ENCODE measurements at regions of chr12 and their contacts with region 1.

Region 1: GRCh38 chr12:123075646-123076171 is 75.2 kb downstream of the PITPNM2 start:
- DNase-seq: peak; percentile 76 to 86 (median 80)
- H3K4me3 ChIP-seq: peak overlapping the region; percentile 3 to 53
- H3K4me3 Mint-ChIP-seq: peak overlapping the region; percentile 85 to 93 (median 90)
- H3K27ac ChIP-seq: peak overlapping the region; percentile 60
- H3K27ac Mint-ChIP-seq: peak overlapping the region; percentile 89 to 98 (median 97)
- H3K4me1 ChIP-seq: peaks cover 42% of the 10 kb centered on the region
- H3K4me1 Mint-ChIP-seq: peaks cover 37 to 46% (median 40%) of the 10 kb centered on the region in 4 donors
- H3K27me3 ChIP-seq: no peaks in the 10 kb centered on the region
- H3K27me3 Mint-ChIP-seq: no peaks in the 10 kb centered on the region

Region 2: DNA sequence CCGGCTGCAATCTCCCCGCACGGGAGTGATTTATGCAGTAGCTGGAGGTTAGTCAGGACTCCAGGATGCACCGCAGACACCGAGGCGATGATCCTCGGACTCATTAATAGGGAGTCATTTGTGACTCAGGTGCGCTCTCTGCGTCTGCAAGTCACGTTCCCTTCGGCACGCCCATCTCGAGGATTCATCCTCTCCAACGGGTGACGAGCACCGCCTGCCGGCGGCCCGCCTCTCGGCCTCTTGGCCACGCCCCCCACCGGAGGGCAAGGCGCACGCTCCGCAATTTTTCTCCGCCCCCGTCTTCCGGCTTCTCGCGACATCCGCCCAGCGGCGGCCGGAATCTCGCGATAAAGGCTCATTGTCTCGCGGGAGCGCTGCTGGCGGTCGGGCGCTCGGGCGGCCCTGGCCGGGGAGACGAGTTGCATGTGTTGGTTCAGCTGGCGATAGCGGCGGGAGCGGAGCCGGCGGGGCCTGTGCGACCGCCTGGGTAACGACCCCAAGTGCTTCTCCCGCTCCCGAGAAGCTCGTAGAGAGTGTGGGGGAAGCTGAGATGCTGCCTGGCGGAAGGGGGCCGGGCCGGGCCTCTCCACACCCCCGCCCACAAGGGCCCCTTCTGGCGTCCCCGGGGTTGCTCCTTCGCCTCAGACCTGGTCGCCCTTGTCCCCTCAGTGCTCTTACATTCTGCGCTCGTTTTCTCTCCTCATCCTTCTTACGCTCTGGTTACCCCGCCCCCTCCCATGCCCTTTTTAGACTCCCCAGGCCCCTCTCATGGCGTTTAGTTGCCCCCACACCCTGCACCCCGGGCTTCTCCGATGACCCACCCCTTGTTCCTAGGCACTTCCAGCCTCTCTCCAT is 323.0 kb before region 1 on chr12 and contains the start of gene DENR:
- CTCF ChIA-PET with region 1: no interaction called
- POLR2A ChIA-PET with region 1: no interaction called
- intact Hi-C with region 1: no loop called
- DNase-seq: peak; percentile 99 to 100 (median 99)
- H3K4me3 ChIP-seq: peak within 1 kb of the TSS; percentile 64 to 77
- H3K4me3 Mint-ChIP-seq: peak within 1 kb of the TSS; percentile 93 to 97 (median 94)
- H3K27ac ChIP-seq: peak within 1 kb of the TSS; percentile 87
- H3K27ac Mint-ChIP-seq: peak within 1 kb of the TSS; percentile 90 to 99 (median 97)
- H3K4me1 ChIP-seq: peaks cover 19% of the 10 kb centered on the region
- H3K4me1 Mint-ChIP-seq: peaks cover 35 to 60% (median 47%) of the 10 kb centered on the region in 4 donors
- H3K27me3 ChIP-seq: no peaks in the 10 kb centered on the region
- H3K27me3 Mint-ChIP-seq: no peaks in the 10 kb centered on the region
- total RNA-seq, gene DENR: 47.8 to 49.1 TPM

Region 3: DNA sequence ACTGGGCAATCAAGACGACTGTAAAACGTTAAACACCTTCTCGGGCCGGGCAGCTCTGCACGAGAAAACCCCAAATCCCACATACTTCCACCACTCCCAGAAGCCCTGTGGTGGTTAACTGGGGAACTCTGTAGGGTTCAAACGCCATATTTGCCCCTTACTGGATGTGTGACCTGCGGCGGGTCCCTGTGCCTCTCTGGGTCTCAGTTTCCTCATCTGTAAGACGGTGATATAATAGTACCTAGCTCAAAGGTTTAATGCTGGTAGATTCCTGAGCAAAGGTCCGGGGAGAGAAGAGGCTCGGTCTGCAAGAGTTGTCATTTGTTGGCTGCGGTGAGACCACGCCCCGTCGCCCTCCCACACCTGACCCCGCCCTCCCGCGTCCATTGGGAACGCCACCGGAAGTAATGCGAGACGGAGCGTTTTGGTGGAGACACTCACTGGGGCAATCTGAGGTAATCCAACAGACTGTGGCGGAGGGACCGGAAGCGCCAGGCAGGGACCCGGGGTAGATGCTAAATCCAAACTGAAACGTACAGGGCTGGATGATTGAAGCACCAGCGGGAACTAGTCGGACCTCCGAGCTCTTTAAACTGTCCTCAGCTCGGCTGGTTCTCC is 101.3 kb before region 1 on chr12:
- CTCF ChIA-PET with region 1: interaction called, 4 read pairs
- POLR2A ChIA-PET with region 1: interaction called, 4 read pairs
- intact Hi-C with region 1: loop called (anchors 2 kb)
- DNase-seq: peak; percentile 97 to 99 (median 98)
- H3K4me3 ChIP-seq: peak overlapping the region; percentile 71 to 100
- H3K4me3 Mint-ChIP-seq: peak overlapping the region; percentile 89 to 99 (median 98)
- H3K27ac ChIP-seq: peak overlapping the region; percentile 98
- H3K27ac Mint-ChIP-seq: peak overlapping the region; percentile 98 to 100 (median 99)
- H3K4me1 ChIP-seq: peaks cover 41% of the 10 kb centered on the region
- H3K4me1 Mint-ChIP-seq: peaks cover 10 to 49% (median 30%) of the 10 kb centered on the region in 4 donors
- H3K27me3 ChIP-seq: no peaks in the 10 kb centered on the region
- H3K27me3 Mint-ChIP-seq: no peaks in the 10 kb centered on the region

Region 4: DNA sequence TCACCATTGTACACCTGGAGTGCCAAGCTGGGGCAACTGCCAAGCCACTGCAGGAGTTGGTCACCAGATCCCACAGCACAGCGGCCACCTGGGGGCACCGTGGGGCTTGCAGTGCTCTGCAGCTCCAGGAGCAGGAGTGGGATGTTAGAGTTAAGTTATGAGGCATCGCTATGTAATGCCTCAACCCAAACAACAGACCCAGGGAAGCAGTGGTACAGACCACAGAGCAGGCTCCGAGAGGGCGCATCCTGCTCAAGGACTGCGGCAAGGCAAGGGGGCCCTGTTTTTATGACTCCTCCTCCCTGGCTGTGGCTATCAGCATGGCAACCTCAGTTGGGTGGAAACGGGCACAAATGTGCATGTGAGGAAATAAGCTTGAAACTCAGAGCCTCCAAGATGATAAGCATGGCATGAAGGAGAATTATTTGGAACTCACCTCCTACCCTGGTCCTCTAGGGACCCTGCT is 32.1 kb before region 1 on chr12:
- CTCF ChIA-PET with region 1: interaction called, 29 read pairs
- POLR2A ChIA-PET with region 1: interaction called, 14 read pairs
- intact Hi-C with region 1: no loop called
- DNase-seq: peak; percentile 58 to 69 (median 69)
- H3K4me3 ChIP-seq: no peak overlapping the region
- H3K4me3 Mint-ChIP-seq: peak overlapping the region in 4 of 8 donors; percentile 15 to 64 (median 46)
- H3K27ac ChIP-seq: no peak overlapping the region
- H3K27ac Mint-ChIP-seq: peak overlapping the region in 6 of 7 donors; percentile 8 to 87 (median 73)
- H3K4me1 ChIP-seq: peaks cover 11% of the 10 kb centered on the region
- H3K4me1 Mint-ChIP-seq: peaks cover 9 to 27% (median 16%) of the 10 kb centered on the region in 4 donors
- H3K27me3 ChIP-seq: no peaks in the 10 kb centered on the region
- H3K27me3 Mint-ChIP-seq: no peaks in the 10 kb centered on the region

Region 5: DNA sequence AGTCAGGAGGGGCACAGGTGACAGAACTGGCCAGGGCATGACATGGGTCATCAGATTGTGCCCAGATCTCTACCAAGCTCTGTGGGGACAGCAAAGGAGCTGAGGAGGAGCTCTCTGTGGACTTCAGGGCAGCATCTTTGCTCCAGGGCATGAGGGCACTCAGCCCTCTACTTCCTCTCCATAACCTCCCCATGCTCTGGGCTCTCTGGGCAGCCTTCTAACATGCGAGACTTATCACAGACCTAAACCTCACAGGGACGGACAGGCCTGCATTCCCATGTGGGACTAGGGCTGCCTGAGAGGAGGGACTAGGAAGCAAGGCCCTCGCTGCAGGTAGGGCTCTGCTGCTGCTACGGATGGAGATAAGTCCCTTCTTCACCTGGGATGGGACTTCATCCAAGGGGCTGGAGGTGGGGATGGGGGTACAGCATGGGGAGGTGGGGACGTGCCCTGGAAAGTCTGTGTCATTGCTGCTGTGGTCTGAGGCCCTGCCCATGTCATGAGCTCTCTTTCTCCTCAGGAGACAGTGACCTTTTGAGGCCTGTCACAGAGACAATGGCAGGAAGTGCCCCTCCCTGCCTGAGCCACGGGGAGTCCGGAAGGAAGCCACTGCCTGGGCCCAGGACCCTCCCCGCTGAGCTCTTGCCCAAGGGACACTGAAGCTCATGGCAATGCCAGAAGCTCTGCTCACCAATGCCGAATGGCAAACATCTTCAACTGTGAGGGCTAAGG is 31.1 kb after region 1 on chr12:
- CTCF ChIA-PET with region 1: interaction called, 18 read pairs
- POLR2A ChIA-PET with region 1: interaction called, 27 read pairs
- intact Hi-C with region 1: no loop called
- DNase-seq: peak; percentile 37 to 64 (median 48)
- H3K4me3 ChIP-seq: peak overlapping the region in 1 of 2 donors; percentile 14
- H3K4me3 Mint-ChIP-seq: peak overlapping the region; percentile 67 to 83 (median 75)
- H3K27ac ChIP-seq: peak overlapping the region; percentile 54
- H3K27ac Mint-ChIP-seq: peak overlapping the region; percentile 82 to 96 (median 95)
- H3K4me1 ChIP-seq: peaks cover 33% of the 10 kb centered on the region
- H3K4me1 Mint-ChIP-seq: peaks cover 31 to 54% (median 39%) of the 10 kb centered on the region in 4 donors
- H3K27me3 ChIP-seq: no peaks in the 10 kb centered on the region
- H3K27me3 Mint-ChIP-seq: no peaks in the 10 kb centered on the region

Region 6: DNA sequence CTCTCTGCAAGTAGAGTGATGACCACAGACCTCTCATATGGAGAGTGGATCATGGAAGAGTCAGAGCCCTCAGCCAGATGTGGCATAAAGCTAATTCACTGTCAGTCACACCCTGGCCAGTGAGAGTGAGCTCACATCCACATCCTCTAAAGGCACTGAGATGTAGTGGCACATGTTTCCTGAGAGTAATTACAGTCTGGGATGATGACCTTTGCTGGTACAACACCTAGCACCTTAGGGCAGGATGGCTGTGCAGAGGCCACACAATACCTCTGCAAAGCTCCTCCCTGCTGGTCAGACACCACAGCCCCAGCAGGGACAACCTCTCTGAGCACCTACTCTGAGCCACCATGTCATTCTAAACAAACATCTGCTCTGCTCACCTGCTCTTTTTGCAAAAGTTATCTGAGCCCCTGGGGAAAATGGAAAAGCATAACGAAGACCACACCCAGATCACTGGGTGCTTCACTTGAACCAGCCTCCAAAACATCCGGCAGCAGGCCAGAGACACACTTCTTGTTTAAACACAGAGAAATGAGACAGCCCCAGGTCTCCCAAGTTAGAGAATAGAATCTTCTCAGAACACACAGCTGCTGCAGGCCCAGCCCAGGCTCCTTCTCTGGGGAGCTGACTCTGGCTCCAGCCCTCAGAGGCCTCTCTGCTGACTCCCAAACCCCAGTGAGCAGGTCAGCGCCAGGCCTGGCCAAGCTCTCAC is 44.9 kb after region 1 on chr12:
- CTCF ChIA-PET with region 1: interaction called, 13 read pairs
- POLR2A ChIA-PET with region 1: interaction called, 15 read pairs
- intact Hi-C with region 1: no loop called
- DNase-seq: peak in 2 of 5 donors; percentile 21 to 26
- H3K4me3 ChIP-seq: no peak overlapping the region
- H3K4me3 Mint-ChIP-seq: peak overlapping the region in 7 of 8 donors; percentile 33 to 66 (median 58)
- H3K27ac ChIP-seq: peak overlapping the region; percentile 27
- H3K27ac Mint-ChIP-seq: peak overlapping the region; percentile 82 to 89 (median 86)
- H3K4me1 ChIP-seq: peaks cover 53% of the 10 kb centered on the region
- H3K4me1 Mint-ChIP-seq: peaks cover 23 to 49% (median 38%) of the 10 kb centered on the region in 4 donors
- H3K27me3 ChIP-seq: no peaks in the 10 kb centered on the region
- H3K27me3 Mint-ChIP-seq: no peaks in the 10 kb centered on the region

Region 7: DNA sequence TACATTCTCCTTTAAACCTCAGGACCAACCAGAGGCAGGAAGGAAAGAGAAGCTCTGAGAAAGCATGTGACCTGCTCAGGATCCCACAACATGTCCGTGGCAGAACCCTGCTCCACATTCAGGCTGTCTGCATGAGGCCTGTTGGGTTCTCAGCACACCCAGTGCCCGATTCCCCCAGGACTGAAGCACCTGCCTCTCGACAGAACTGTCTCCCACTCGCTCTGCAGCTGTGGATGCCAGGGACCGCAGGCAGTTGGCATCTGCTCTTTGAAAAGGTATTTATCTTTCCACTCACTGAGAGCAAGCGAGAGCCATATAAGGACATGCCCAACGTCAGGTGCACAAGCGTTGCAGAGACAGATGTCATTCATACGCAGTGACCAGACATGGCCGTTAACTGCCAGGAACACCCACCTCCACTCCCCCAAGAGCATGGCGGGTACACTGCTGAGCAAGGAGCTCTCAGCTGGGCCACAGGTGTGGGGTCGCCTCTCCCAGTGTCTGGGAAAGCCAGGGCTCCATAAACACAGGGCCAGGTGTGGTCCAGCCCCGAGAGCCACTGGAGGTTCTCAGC is 56.3 kb after region 1 on chr12:
- CTCF ChIA-PET with region 1: interaction called, 3 read pairs
- POLR2A ChIA-PET with region 1: interaction called, 8 read pairs
- intact Hi-C with region 1: loop called (anchors 5 kb)
- DNase-seq: peak; percentile 42 to 63 (median 50)
- H3K4me3 ChIP-seq: peak overlapping the region; percentile 22 to 26
- H3K4me3 Mint-ChIP-seq: peak overlapping the region; percentile 55 to 82 (median 67)
- H3K27ac ChIP-seq: peak overlapping the region; percentile 48
- H3K27ac Mint-ChIP-seq: peak overlapping the region; percentile 86 to 95 (median 92)
- H3K4me1 ChIP-seq: peaks cover 18% of the 10 kb centered on the region
- H3K4me1 Mint-ChIP-seq: peaks cover 20 to 39% (median 27%) of the 10 kb centered on the region in 4 donors
- H3K27me3 ChIP-seq: no peaks in the 10 kb centered on the region
- H3K27me3 Mint-ChIP-seq: no peaks in the 10 kb centered on the region

Region 8: DNA sequence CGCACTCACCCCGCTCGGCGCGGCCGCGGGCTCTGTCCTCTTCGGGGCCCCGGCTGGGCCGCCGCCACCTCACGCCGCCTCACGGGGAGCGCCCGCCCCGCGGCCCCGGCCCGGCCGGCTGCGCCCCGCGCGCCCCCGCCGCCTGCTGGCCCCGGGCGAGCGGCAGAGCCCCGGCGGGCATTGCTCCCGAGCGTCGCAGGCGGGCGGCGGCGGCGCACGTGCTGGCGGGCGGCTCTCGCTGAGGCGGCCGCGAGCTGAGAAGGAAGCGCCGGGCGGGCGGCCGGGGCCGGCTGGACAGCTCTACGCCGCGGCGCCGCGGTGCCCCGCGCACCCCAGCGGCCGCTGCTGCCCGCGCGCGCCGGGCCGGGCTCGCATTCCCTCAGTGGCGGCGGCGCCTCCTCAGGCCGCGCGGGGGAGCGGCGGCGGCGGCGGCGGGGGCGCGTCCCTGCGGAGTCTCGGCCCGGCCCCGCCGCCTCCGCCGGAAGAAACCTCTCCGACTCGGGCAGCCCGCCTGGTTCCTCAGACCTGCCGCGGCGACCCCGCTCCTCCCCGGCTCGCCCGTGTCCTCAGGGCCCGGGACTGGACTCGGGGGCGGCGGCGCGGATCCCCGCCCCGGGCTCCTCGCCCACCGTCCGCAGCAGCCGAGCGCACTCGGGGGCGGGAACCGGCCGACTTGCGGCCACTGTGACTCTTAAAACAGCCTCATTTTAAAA is 75.2 kb after region 1 on chr12 and contains the start of gene PITPNM2:
- CTCF ChIA-PET with region 1: interaction called, 22 read pairs
- POLR2A ChIA-PET with region 1: interaction called, 24 read pairs
- intact Hi-C with region 1: loop called (anchors 1 kb)
- DNase-seq: peak; percentile 49 to 67 (median 63)
- H3K4me3 ChIP-seq: peak within 1 kb of the TSS; percentile 44 to 52
- H3K4me3 Mint-ChIP-seq: peak within 1 kb of the TSS; percentile 80 to 89 (median 86)
- H3K27ac ChIP-seq: peak within 1 kb of the TSS; percentile 34
- H3K27ac Mint-ChIP-seq: peak within 1 kb of the TSS; percentile 51 to 86 (median 73)
- H3K4me1 ChIP-seq: peaks cover 23% of the 10 kb centered on the region
- H3K4me1 Mint-ChIP-seq: peaks cover 17 to 41% (median 25%) of the 10 kb centered on the region in 4 donors
- H3K27me3 ChIP-seq: no peaks in the 10 kb centered on the region
- H3K27me3 Mint-ChIP-seq: no peaks in the 10 kb centered on the region
- total RNA-seq, gene PITPNM2: 15.7 to 16.8 TPM

Region 9: GRCh38 chr12:123410041-123410412 is 334.3 kb after region 1 on chr12:
- CTCF ChIA-PET with region 1: no interaction called
- POLR2A ChIA-PET with region 1: no interaction called
- intact Hi-C with region 1: no loop called
- DNase-seq: no peak
- H3K4me3 ChIP-seq: no peak overlapping the region
- H3K4me3 Mint-ChIP-seq: no peak overlapping the region
- H3K27ac ChIP-seq: no peak overlapping the region
- H3K27ac Mint-ChIP-seq: peak overlapping the region in 4 of 7 donors; percentile 22 to 79 (median 50)
- H3K4me1 ChIP-seq: no peaks in the 10 kb centered on the region
- H3K4me1 Mint-ChIP-seq: peaks cover 0 to 3% (median 1%) of the 10 kb centered on the region in 4 donors
- H3K27me3 ChIP-seq: no peaks in the 10 kb centered on the region
- H3K27me3 Mint-ChIP-seq: no peaks in the 10 kb centered on the region